Naive thymus-derived CD4-positive, alpha-beta T cell (primary cell): ENCODE measurements at regions of chr4 and their contacts with region 1.

Region 1: GRCh38 chr4:177464026-177464425 is 21.8 kb upstream of the AGA start:
- DNase-seq: no peak
- ATAC-seq: no peak
- H3K4me3 ChIP-seq: no peak overlapping the region
- H3K4me3 Mint-ChIP-seq: no peak overlapping the region
- H3K27ac ChIP-seq: no peak overlapping the region
- H3K27ac Mint-ChIP-seq: no peak overlapping the region
- H3K4me1 ChIP-seq: no peaks in the 10 kb centered on the region
- H3K4me1 Mint-ChIP-seq: peaks cover 0 to 6% (median 5%) of the 10 kb centered on the region in 7 donors
- H3K27me3 ChIP-seq: no peaks in the 10 kb centered on the region
- H3K27me3 Mint-ChIP-seq: no peaks in the 10 kb centered on the region

Region 2: GRCh38 chr4:177483271-177483670 is 19.2 kb after region 1 on chr4:
- CTCF ChIA-PET with region 1: no interaction called
- POLR2A ChIA-PET with region 1: no interaction called
- intact Hi-C with region 1: loop called in 1 of 2 experiments (anchors 2 kb)
- DNase-seq: no peak
- ATAC-seq: no peak
- H3K4me3 ChIP-seq: no peak overlapping the region
- H3K4me3 Mint-ChIP-seq: peak overlapping the region in 2 of 10 donors; percentile 54 to 57
- H3K27ac ChIP-seq: no peak overlapping the region
- H3K27ac Mint-ChIP-seq: peak overlapping the region in 1 of 9 donors; percentile 33
- H3K4me1 ChIP-seq: peaks cover 0 to 4% of the 10 kb centered on the region in 2 donors
- H3K4me1 Mint-ChIP-seq: peaks cover 0 to 20% (median 13%) of the 10 kb centered on the region in 7 donors
- H3K27me3 ChIP-seq: no peaks in the 10 kb centered on the region
- H3K27me3 Mint-ChIP-seq: no peaks in the 10 kb centered on the region

Region 3: DNA sequence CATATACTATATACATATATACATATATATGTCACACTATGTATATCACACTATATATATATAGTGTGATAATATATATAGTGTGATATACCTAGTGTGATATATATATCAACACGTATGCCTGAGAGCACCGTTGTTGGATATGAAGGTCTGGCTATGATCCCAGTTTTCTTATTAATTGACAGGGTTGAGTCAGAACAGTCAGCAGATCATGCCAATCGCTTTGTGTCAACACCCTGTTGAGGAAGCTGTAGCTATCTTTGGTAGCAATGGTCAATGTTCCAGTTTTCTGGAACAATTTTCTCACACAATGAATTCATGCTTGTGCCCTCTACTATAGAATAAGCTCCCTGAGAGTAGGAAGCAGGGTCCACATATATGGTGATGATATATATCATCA is 474.2 kb after region 1 on chr4:
- CTCF ChIA-PET with region 1: no interaction called
- POLR2A ChIA-PET with region 1: no interaction called
- intact Hi-C with region 1: no loop called
- DNase-seq: no peak
- ATAC-seq: no peak
- H3K4me3 ChIP-seq: no peak overlapping the region
- H3K4me3 Mint-ChIP-seq: no peak overlapping the region
- H3K27ac ChIP-seq: no peak overlapping the region
- H3K27ac Mint-ChIP-seq: no peak overlapping the region
- H3K4me1 ChIP-seq: no peaks in the 10 kb centered on the region
- H3K4me1 Mint-ChIP-seq: no peaks in the 10 kb centered on the region
- H3K27me3 ChIP-seq: no peaks in the 10 kb centered on the region
- H3K27me3 Mint-ChIP-seq: no peaks in the 10 kb centered on the region